ENCODE measurements at regions of chr3 and their contacts with region 1.

Region 1: DNA sequence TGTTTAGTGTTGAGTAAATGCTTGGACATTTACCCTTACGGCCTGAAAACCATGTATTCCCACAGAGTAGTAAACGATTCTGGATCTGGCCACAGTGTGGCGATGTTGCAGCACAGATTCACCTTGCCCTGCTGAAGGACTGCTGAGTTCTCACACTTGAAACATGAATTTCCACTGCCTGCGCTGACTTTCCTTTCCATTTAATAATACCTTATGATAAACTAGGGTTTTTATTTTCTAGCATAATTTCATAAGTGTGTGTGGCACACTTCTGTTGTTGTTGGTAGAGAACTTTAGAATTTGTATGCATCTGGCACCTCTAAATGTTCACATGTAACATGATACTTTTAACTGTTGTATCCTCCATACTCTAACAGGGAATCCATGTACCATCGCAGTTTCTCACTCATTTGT is 53.9 kb downstream of the C3orf38 start:
- DNase-seq: peak; percentile 44 to 88 (median 67)
- H3K4me3 ChIP-seq: no peak overlapping the region
- H3K27ac ChIP-seq: no peak overlapping the region
- H3K4me1 ChIP-seq: no peaks in the 10 kb centered on the region
- H3K27me3 ChIP-seq: no peaks in the 10 kb centered on the region
- CTCF ChIP-seq: peak; percentile 67 to 82 (median 74)
- POLR2A ChIP-seq: no peak

Region 2: DNA sequence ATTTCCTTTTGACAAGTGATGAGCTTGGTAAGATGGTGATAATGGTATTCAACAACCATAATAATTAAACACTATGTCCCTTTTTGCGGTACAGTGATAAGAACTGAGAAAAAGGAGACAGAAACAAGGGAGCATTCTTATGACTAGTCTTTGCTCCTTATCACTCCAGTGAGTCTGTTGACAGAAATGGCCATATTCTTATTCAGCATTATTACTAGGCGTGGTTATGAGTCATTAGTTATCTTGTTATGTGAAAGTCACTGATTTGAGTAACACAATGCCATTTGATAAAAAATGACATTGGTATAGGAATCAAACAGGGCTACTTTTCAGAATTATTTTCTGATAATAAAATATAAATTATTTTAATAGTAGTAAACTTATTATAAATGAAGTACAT is 139.6 kb after region 1 on chr3:
- intact Hi-C with region 1: no loop called
- DNase-seq: no peak
- H3K4me3 ChIP-seq: no peak overlapping the region
- H3K27ac ChIP-seq: no peak overlapping the region
- H3K4me1 ChIP-seq: no peaks in the 10 kb centered on the region
- H3K27me3 ChIP-seq: no peaks in the 10 kb centered on the region
- CTCF ChIP-seq: no peak
- POLR2A ChIP-seq: no peak

Region 3: DNA sequence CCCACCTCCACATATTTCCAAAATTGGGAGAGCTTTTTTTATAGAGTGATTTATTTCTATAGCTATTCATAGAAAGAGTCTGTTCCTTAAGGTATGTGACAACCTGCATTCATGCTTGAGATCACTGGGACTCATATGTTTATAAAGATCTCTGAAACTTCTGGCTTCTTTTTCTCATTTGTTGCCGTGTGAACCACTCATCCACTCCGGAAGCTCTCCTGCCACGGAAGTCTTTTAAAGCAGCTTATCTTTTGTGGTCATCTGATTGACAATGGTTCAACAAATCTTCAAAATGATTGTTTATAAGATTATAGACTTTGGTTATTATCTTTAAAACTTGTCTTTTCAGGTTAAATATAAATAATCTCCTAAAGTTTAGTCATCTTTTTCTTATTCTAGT is 206.6 kb after region 1 on chr3:
- intact Hi-C with region 1: no loop called
- DNase-seq: no peak
- H3K4me3 ChIP-seq: no peak overlapping the region
- H3K27ac ChIP-seq: no peak overlapping the region
- H3K4me1 ChIP-seq: no peaks in the 10 kb centered on the region
- H3K27me3 ChIP-seq: no peaks in the 10 kb centered on the region
- CTCF ChIP-seq: no peak
- POLR2A ChIP-seq: no peak

Region 4: DNA sequence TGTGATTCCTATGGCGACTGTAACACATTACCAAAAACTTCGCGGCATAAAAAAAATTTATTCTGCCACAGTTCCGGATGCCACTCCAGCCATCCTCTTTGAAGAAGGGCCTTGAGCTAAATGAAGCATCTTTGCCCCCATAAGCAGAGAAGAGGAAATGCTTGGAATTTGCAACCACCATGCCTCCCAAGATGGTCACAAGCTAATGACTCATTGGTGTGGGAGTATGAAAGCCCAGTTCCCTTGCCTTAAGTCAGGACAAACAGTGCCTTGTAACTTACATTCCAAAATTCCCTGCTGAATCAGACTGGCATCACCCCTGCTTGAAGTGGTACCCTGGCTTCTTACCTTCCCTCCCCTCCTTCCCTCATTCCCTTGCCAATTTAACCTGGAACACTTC is 1981.2 kb after region 1 on chr3:
- intact Hi-C with region 1: loop called in 1 of 2 experiments (anchors 10 kb)
- DNase-seq: no peak
- H3K4me3 ChIP-seq: no peak overlapping the region
- H3K27ac ChIP-seq: no peak overlapping the region
- H3K4me1 ChIP-seq: no peaks in the 10 kb centered on the region
- H3K27me3 ChIP-seq: no peaks in the 10 kb centered on the region
- CTCF ChIP-seq: no peak
- POLR2A ChIP-seq: no peak